ENCODE measurements at regions of chr5 and their contacts with region 1.

Region 1: GRCh38 chr5:133944263-133945185 is 23.9 kb downstream of the C5orf15 start:
- DNase-seq: peak; percentile 83
- H3K4me3 ChIP-seq: no peak overlapping the region
- H3K27ac ChIP-seq: no peak overlapping the region
- H3K4me1 ChIP-seq: peaks cover 31% of the 10 kb centered on the region
- CTCF ChIP-seq: peak; percentile 90

Region 2: DNA sequence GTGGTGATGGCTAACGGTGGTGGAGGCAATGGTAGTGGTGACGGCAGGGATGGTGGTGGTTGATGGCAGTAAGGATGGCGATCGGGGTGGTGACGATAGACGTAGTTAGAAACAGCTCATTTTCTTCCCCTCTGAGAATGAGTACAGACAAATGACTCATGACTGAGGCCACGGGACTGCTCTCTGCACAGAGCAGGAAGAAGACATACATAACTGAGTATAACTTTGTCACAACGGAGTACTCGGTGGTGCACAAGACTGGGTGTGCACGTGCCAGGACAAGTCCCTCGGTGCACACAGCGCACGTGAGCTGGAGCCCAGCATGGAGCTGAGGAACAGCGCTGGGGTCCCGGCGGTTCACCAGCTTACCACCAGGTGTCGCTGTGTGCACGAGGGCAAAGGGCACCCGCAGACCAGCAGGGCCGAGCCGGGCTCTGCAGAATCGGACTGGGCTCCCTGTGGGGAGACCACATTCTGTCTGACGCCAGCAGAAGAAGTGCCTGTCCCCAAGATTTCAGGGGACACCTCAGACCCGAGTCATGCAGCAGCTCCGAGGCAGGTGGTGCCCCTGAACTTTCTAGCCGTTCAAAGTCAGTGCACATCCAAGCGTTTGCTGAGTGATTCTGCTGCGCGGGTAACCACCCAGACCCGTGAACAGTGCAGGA is 520.8 kb before region 1 on chr5:
- CTCF ChIA-PET with region 1: interaction called, 3 read pairs
- POLR2A ChIA-PET with region 1: no interaction called
- intact Hi-C with region 1: loop called (anchors 1 kb)
- DNase-seq: peak; percentile 56
- H3K4me3 ChIP-seq: no peak overlapping the region
- H3K27ac ChIP-seq: no peak overlapping the region
- H3K4me1 ChIP-seq: peaks cover 6% of the 10 kb centered on the region
- CTCF ChIP-seq: peak; percentile 88

Region 3: GRCh38 chr5:133552931-133553525 is 391.5 kb before region 1 on chr5:
- CTCF ChIA-PET with region 1: no interaction called
- POLR2A ChIA-PET with region 1: no interaction called
- intact Hi-C with region 1: loop called (anchors 1 kb)
- DNase-seq: peak; percentile 63
- H3K4me3 ChIP-seq: no peak overlapping the region
- H3K27ac ChIP-seq: no peak overlapping the region
- H3K4me1 ChIP-seq: no peaks in the 10 kb centered on the region
- CTCF ChIP-seq: peak; percentile 88

Region 4: GRCh38 chr5:133742431-133742988 is 202.0 kb before region 1 on chr5:
- CTCF ChIA-PET with region 1: no interaction called
- POLR2A ChIA-PET with region 1: no interaction called
- intact Hi-C with region 1: loop called (anchors 5 kb)
- DNase-seq: peak; percentile 74
- H3K4me3 ChIP-seq: peak overlapping the region; percentile 25
- H3K27ac ChIP-seq: peak overlapping the region; percentile 53
- H3K4me1 ChIP-seq: peaks cover 38% of the 10 kb centered on the region
- CTCF ChIP-seq: no peak

Region 5: GRCh38 chr5:133863857-133864585 is 80.5 kb before region 1 on chr5:
- CTCF ChIA-PET with region 1: no interaction called
- POLR2A ChIA-PET with region 1: no interaction called
- intact Hi-C with region 1: loop called (anchors 1 kb)
- DNase-seq: peak; percentile 48
- H3K4me3 ChIP-seq: no peak overlapping the region
- H3K27ac ChIP-seq: no peak overlapping the region
- H3K4me1 ChIP-seq: no peaks in the 10 kb centered on the region
- CTCF ChIP-seq: peak; percentile 57

Region 6: DNA sequence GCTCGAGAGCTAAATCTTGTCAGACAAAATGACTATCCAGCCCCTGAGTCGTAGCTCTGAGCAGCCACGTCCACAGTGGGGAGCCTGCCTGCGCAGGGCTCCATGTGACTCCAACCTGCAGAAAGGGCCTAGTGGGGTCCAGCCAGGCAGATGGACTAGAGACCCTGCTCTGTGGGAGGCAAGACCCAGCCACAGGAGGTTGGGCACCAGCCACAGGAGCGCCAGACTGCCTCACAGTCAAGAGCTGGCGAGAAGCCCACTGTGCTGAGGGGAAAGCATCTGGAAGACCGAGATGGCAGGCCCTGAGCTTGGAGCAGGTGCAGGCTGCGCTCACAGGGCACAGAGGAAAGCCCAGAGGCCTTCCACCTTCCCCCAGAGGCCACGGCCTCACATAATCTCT is 37.4 kb before region 1 on chr5:
- CTCF ChIA-PET with region 1: no interaction called
- POLR2A ChIA-PET with region 1: interaction called, 15 read pairs
- intact Hi-C with region 1: loop called (anchors 1 kb)
- DNase-seq: no peak
- H3K4me3 ChIP-seq: no peak overlapping the region
- H3K27ac ChIP-seq: no peak overlapping the region
- H3K4me1 ChIP-seq: peaks cover 10% of the 10 kb centered on the region
- CTCF ChIP-seq: no peak

Region 7: DNA sequence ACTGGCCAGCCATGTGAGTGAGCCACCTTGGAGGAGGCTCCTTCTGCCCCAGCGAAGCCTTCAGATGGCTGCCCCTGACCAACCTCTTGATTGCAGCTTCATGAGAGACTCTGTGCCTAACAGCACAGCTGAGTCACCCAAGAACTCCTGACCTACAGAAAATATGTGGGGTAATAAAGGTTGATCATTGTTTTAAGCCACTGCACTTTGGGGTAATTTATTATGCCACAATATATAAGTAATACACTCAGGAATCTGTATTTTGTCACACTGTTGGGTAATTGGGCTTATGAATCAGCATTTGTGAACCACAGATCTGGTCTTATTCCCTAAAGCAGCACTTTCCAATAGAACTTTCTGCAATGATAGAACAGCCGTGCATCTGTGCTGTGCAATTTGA is 84.6 kb after region 1 on chr5:
- CTCF ChIA-PET with region 1: no interaction called
- POLR2A ChIA-PET with region 1: no interaction called
- intact Hi-C with region 1: no loop called
- DNase-seq: no peak
- H3K4me3 ChIP-seq: no peak overlapping the region
- H3K27ac ChIP-seq: no peak overlapping the region
- H3K4me1 ChIP-seq: no peaks in the 10 kb centered on the region
- CTCF ChIP-seq: no peak

Region 8: DNA sequence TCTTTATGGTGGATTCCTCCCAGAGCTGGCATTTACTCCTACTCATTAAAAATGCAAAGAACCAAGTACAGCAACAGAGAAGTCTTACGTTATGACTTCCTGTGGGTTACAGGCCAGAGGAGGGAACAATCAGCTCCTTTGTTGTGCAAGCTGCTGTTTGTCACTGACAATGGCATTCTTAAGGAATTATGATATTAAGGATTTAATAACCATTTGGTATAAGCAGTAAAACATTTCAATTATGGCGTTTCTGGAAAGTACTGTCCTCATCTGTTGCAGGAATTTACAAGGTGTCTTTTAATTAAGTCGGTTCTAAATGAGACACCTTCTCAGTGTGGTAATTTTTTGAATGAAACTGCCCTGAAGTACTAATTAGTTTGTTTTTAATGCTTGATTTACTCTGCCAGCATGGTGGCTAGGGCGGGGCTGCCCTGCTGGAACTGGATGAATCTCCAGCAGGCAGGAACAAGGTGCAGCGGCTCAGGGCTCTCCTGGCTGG is 109.4 kb after region 1 on chr5:
- CTCF ChIA-PET with region 1: no interaction called
- POLR2A ChIA-PET with region 1: no interaction called
- intact Hi-C with region 1: no loop called
- DNase-seq: no peak
- H3K4me3 ChIP-seq: no peak overlapping the region
- H3K27ac ChIP-seq: no peak overlapping the region
- H3K4me1 ChIP-seq: no peaks in the 10 kb centered on the region
- CTCF ChIP-seq: no peak